HCT116 (cell line): ENCODE measurements at regions of chr12 and their contacts with region 1.

Region 1: GRCh38 chr12:69879041-69879960 is 54.3 kb downstream of the MYRFL start:
- DNase-seq: peak; percentile 59
- ATAC-seq: peak; percentile 96
- H3K4me3 ChIP-seq: peak overlapping the region; percentile 18 to 50
- H3K27ac ChIP-seq: no peak overlapping the region
- H3K4me1 ChIP-seq: peaks cover 0 to 8% of the 10 kb centered on the region in 2 experiments; a peak in 2 of 4 replicates
- H3K27me3 ChIP-seq: no peaks in the 10 kb centered on the region
- CTCF ChIP-seq: peak; percentile 79 to 95 (median 79)
- POLR2A ChIP-seq: no peak
- RAD21 ChIP-seq: peak; percentile 96

Region 2: GRCh38 chr12:69359531-69360347 is 519.6 kb before region 1 on chr12 and contains the start of gene YEATS4:
- CTCF ChIA-PET with region 1: no interaction called
- POLR2A ChIA-PET with region 1: no interaction called
- RAD21 ChIA-PET with region 1: interaction called in 1 of 2 experiments, 3 read pairs
- intact Hi-C with region 1: loop called (anchors 10 kb)
- DNase-seq: peak; percentile 90
- ATAC-seq: peak; percentile 89
- H3K4me3 ChIP-seq: peak within 1 kb of the TSS; percentile 56 to 63
- H3K27ac ChIP-seq: peak within 1 kb of the TSS; percentile 99
- H3K4me1 ChIP-seq: peaks cover 5 to 24% of the 10 kb centered on the region in 2 experiments; a peak in 3 of 4 replicates
- H3K27me3 ChIP-seq: no peaks in the 10 kb centered on the region
- CTCF ChIP-seq: no peak
- POLR2A ChIP-seq: peak; percentile 24
- RAD21 ChIP-seq: no peak
- total RNA-seq, gene YEATS4: 32.0 TPM

Region 3: DNA sequence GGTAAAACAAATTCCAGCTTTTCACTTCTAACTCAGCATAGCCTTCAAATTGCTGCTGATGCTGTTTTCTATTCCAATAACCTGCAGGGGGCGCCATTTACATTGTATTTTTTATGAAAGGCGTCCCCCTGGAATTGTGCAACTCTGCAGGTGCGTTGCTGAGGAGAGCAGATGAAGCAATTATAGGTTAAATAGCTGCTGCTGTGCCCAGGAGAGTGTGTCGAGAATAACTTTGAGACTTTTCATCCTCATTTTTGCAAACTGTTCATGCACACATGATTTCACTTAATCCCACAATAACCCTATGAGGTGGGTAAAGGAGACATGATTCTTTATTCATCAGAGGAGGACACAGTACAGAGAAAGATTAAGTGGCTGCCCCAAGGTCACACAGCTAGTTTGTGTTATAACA is 21.4 kb after region 1 on chr12:
- CTCF ChIA-PET with region 1: interaction called, 10 read pairs
- POLR2A ChIA-PET with region 1: no interaction called
- RAD21 ChIA-PET with region 1: no interaction called
- intact Hi-C with region 1: no loop called
- DNase-seq: peak; percentile 45
- ATAC-seq: peak; percentile 86
- H3K4me3 ChIP-seq: no peak overlapping the region
- H3K27ac ChIP-seq: no peak overlapping the region
- H3K4me1 ChIP-seq: no peaks in the 10 kb centered on the region
- H3K27me3 ChIP-seq: no peaks in the 10 kb centered on the region
- CTCF ChIP-seq: peak; percentile 67 to 89 (median 81)
- POLR2A ChIP-seq: no peak
- RAD21 ChIP-seq: peak; percentile 97

Region 4: DNA sequence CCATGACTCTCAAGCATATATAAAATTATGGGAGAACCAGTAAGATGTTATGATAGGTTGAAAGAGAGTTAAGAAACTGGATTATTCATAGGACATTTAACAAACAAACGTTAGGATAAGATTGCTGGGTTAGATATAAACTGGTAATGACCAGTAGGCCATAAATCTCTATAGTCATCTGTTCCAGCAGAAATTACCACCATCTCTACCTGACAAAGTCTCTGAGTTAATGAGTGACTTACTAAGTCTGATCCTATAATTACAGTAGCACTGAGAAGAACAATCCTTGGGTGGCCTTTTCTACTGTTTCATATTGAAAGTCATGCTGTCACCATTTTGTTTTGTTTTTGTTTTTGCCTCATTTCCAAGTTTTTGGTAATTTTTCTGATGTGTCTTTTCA is 227.0 kb after region 1 on chr12:
- CTCF ChIA-PET with region 1: no interaction called
- POLR2A ChIA-PET with region 1: no interaction called
- RAD21 ChIA-PET with region 1: no interaction called
- intact Hi-C with region 1: no loop called
- DNase-seq: no peak
- ATAC-seq: no peak
- H3K4me3 ChIP-seq: no peak overlapping the region
- H3K27ac ChIP-seq: no peak overlapping the region
- H3K4me1 ChIP-seq: no peaks in the 10 kb centered on the region
- H3K27me3 ChIP-seq: no peaks in the 10 kb centered on the region
- CTCF ChIP-seq: no peak
- POLR2A ChIP-seq: no peak
- RAD21 ChIP-seq: no peak

Region 5: GRCh38 chr12:70719672-70720420 is 840.5 kb after region 1 on chr12:
- CTCF ChIA-PET with region 1: interaction called, 9 read pairs
- POLR2A ChIA-PET with region 1: no interaction called
- RAD21 ChIA-PET with region 1: no interaction called
- intact Hi-C with region 1: loop called (anchors 2 kb)
- DNase-seq: no peak
- ATAC-seq: peak; percentile 84
- H3K4me3 ChIP-seq: no peak overlapping the region
- H3K27ac ChIP-seq: no peak overlapping the region
- H3K4me1 ChIP-seq: no peaks in the 10 kb centered on the region
- H3K27me3 ChIP-seq: no peaks in the 10 kb centered on the region
- CTCF ChIP-seq: peak; percentile 94 to 97 (median 96)
- POLR2A ChIP-seq: no peak
- RAD21 ChIP-seq: peak; percentile 94

Region 6: GRCh38 chr12:70849265-70849960 is 970.1 kb after region 1 on chr12:
- CTCF ChIA-PET with region 1: no interaction called
- POLR2A ChIA-PET with region 1: no interaction called
- RAD21 ChIA-PET with region 1: no interaction called
- intact Hi-C with region 1: loop called (anchors 5 kb)
- DNase-seq: peak; percentile 16
- ATAC-seq: peak; percentile 44; the same call in 1 of the 2 replicates
- H3K4me3 ChIP-seq: no peak overlapping the region
- H3K27ac ChIP-seq: no peak overlapping the region
- H3K4me1 ChIP-seq: no peaks in the 10 kb centered on the region
- H3K27me3 ChIP-seq: no peaks in the 10 kb centered on the region
- CTCF ChIP-seq: peak; percentile 27 to 70 (median 59); a peak in 4 of 6 replicates
- POLR2A ChIP-seq: no peak
- RAD21 ChIP-seq: peak; percentile 74